ENCODE measurements at regions of chr21 and their contacts with region 1.

Region 1: GRCh38 chr21:33380483-33380998 is 22.7 kb upstream of the IFNGR2 start:
- DNase-seq: peak; percentile 97

Region 2: GRCh38 chr21:33403779-33404585 is 23.4 kb after region 1 on chr21:
- intact Hi-C with region 1: loop called (anchors 2 kb)
- DNase-seq: peak; percentile 81

Measured in cardiac septum (tissue), 1 donor.